ENCODE measurements at regions of chr3 and their contacts with region 1.

Region 1: GRCh38 chr3:10010486-10011465 is 15.5 kb upstream of the FANCD2 start:
- DNase-seq: peak; percentile 90 to 98
- H3K4me3 ChIP-seq: peak overlapping the region; percentile 60 to 81
- H3K27ac ChIP-seq: peak overlapping the region; percentile 52 to 78
- H3K4me1 ChIP-seq: peaks cover 9 to 33% of the 10 kb centered on the region in 2 donors
- H3K27me3 ChIP-seq: no peaks in the 10 kb centered on the region
- CTCF ChIP-seq: peak in 1 of 3 experiments; percentile 4

Region 2: DNA sequence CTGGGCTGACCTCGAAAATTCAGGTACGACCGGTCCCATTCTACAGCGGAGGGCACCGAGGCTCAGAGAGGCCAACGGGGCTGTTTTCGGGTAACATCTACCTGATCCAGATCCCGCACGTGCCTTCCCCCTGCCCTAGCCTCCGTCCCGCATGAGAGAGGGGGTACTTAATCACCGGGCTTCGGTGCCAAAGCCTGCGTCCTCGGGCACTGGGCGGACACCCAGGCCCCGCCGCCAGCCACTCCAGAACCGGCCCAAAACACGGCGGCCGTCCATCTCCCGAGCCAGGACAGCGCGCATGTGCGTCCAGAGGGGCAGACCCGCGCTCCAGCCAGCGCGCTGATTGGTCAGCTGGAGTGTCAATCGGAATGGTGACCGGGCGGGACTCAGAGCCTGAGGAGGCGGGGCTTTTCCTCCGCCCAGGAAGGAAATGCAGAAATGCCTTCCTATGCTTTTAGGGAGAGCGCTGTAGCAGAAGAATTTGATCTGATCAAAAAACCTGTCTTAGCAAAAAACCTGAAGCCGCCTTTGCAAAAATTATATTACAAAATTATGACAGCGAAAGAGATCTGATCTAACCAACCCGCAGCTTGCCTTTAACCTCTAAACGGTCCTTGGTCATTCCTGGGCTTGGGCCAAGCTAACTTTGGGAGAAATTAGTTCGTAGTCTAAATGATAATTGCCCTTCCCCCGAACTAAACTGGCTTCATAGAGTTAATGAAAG is 166.9 kb before region 1 on chr3 and contains the start of gene RPUSD3:
- intact Hi-C with region 1: loop called (anchors 10 kb)
- DNase-seq: peak; percentile 89 to 99
- H3K4me3 ChIP-seq: peak within 1 kb of the TSS; percentile 76 to 77
- H3K27ac ChIP-seq: peak within 1 kb of the TSS; percentile 80 to 84
- H3K4me1 ChIP-seq: peaks cover 4 to 9% of the 10 kb centered on the region in 2 donors
- H3K27me3 ChIP-seq: no peaks in the 10 kb centered on the region
- CTCF ChIP-seq: no peak
- total RNA-seq, gene RPUSD3: 30.7 TPM

Region 3: DNA sequence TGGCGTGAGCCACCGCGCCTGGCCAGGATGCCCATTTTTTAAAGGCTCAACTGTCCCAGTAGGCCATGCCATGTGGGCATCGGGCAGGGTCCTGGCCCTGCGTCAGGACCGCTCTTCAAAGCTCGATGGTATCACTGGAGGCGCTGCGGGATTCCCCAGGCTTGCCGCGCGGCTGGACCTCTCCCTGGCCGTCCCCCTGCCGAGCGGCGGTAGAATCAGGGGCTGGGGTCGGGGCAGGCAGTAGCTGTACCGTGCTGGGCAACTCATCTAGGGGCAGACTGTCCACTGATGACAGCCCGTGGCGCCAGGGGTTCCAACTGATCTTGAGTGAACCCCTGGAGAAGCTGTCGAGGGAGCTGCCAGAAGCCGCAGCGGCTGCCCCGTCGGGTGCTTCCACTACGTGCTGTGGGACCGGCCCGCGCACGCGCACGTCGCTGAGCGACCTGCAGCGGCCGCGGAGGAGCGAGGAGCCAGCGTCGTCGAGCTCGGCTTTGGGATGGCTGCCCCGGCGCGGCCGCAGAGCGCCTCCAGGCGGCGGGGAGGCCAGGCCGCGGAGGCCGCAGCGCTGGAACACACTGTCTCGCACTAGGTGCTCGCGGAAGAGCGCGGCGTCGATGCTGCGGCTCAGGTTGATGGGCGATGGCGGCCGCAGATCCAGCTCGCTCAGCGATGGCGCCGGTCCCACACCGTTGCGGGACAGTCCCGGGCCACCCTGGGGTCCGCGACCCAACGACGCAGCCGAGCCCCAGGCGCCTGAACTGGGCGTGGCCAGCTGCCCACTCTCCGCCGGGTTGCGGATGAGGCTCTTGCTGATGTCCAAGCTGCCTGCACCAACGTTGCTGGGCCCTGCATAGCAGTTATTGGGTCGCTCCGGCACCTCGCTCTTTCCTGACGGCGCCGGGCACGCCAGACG is 64.4 kb before region 1 on chr3:
- intact Hi-C with region 1: loop called (anchors 1 kb)
- DNase-seq: peak; percentile 65 to 93
- H3K4me3 ChIP-seq: peak overlapping the region; percentile 76 to 80
- H3K27ac ChIP-seq: peak overlapping the region; percentile 71 to 81
- H3K4me1 ChIP-seq: peaks cover 5 to 7% of the 10 kb centered on the region in 2 donors
- H3K27me3 ChIP-seq: no peaks in the 10 kb centered on the region
- CTCF ChIP-seq: peak; percentile 63 to 88 (median 76)

Region 4: DNA sequence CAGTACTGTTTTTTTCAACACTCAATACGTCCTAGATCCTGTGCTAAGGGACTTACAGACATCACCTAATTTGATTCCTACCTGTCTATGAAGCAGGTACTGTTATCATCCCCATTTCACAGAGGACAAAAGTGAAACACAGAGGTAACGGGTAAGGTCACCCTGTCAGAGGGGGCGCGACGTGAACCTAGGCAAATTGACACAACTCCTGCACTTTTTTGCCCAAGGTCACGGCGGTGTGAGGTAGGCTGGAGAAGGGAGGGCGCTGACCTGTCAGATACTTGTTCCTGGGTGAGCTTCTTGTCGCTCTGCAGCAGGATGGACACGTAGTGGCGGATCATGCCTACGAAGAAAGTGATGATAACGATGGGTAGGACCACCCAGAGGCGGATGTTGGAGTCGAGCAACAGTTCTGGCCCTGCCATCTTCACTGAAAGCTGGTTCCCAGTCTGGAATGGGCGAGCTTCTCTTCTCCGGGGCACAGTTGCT is 24.5 kb before region 1 on chr3:
- intact Hi-C with region 1: loop called (anchors 2 kb)
- DNase-seq: no peak
- H3K4me3 ChIP-seq: peak overlapping the region; percentile 79 to 86
- H3K27ac ChIP-seq: peak overlapping the region; percentile 72 to 76
- H3K4me1 ChIP-seq: peaks cover 5 to 17% of the 10 kb centered on the region in 2 donors
- H3K27me3 ChIP-seq: no peaks in the 10 kb centered on the region
- CTCF ChIP-seq: no peak

Region 5: GRCh38 chr3:10074666-10075065 is 63.9 kb after region 1 on chr3:
- intact Hi-C with region 1: no loop called
- DNase-seq: no peak
- H3K4me3 ChIP-seq: no peak overlapping the region
- H3K27ac ChIP-seq: no peak overlapping the region
- H3K4me1 ChIP-seq: no peaks in the 10 kb centered on the region
- H3K27me3 ChIP-seq: no peaks in the 10 kb centered on the region
- CTCF ChIP-seq: no peak